Tibial artery (tissue), 4 donors: ENCODE measurements at regions of chr20 and their contacts with region 1.

Region 1: GRCh38 chr20:54093423-54094267 is 23.3 kb upstream of the BCAS1 start:
- DNase-seq: no peak
- H3K4me3 ChIP-seq: no peak overlapping the region
- H3K27ac ChIP-seq: no peak overlapping the region
- H3K4me1 ChIP-seq: no peaks in the 10 kb centered on the region
- H3K27me3 ChIP-seq: peaks cover 0 to 11% of the 10 kb centered on the region in 2 donors
- CTCF ChIP-seq: no peak

Region 2: DNA sequence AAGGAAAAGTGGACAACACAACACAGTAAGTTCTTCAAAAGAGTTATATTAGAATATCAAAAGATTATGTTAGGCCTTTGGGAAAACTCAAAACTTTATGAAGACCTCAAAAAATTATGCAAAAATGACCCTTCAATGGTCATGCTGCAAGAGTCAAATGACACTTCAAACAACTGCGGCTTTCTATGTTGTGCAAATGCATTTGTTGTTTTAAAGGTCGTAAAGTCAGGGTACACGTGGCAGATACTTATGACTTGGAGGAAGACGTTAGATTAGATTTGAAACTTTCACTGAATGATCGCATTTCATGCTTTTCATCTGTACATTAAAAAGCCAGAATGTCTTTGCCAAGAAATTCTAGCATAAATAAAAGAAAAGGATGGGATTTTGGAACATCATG is 54.7 kb before region 1 on chr20:
- intact Hi-C with region 1: loop called (anchors 10 kb)
- DNase-seq: no peak
- H3K4me3 ChIP-seq: no peak overlapping the region
- H3K27ac ChIP-seq: no peak overlapping the region
- H3K4me1 ChIP-seq: peaks cover 0 to 3% (median 0%) of the 10 kb centered on the region in 4 donors
- H3K27me3 ChIP-seq: no peaks in the 10 kb centered on the region
- CTCF ChIP-seq: no peak

Region 3: DNA sequence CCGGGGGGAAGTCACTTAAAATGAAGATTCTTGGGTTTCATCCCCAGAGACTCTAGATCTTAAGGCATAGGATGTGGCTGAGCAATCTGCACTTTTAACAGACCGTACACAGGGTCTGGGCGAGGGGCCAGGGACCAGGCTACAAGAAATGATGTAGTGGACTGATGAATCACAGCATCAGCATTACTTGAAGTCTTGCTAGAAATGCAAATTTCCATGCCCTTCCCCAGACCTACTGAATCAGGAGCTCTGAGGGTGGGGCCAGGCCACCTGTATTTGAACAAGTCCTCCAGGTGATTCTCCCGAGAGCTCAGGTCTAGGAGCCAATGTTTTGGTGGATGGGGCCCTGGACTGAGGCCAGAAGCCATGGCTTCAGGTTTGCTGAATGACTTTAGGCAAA is 550.1 kb after region 1 on chr20:
- intact Hi-C with region 1: loop called (anchors 5 kb)
- DNase-seq: no peak
- H3K4me3 ChIP-seq: no peak overlapping the region
- H3K27ac ChIP-seq: no peak overlapping the region
- H3K4me1 ChIP-seq: no peaks in the 10 kb centered on the region
- H3K27me3 ChIP-seq: no peaks in the 10 kb centered on the region
- CTCF ChIP-seq: no peak